Ascending aorta (tissue), 2 donors: ENCODE measurements at regions of chr9 and their contacts with region 1.

Region 1: DNA sequence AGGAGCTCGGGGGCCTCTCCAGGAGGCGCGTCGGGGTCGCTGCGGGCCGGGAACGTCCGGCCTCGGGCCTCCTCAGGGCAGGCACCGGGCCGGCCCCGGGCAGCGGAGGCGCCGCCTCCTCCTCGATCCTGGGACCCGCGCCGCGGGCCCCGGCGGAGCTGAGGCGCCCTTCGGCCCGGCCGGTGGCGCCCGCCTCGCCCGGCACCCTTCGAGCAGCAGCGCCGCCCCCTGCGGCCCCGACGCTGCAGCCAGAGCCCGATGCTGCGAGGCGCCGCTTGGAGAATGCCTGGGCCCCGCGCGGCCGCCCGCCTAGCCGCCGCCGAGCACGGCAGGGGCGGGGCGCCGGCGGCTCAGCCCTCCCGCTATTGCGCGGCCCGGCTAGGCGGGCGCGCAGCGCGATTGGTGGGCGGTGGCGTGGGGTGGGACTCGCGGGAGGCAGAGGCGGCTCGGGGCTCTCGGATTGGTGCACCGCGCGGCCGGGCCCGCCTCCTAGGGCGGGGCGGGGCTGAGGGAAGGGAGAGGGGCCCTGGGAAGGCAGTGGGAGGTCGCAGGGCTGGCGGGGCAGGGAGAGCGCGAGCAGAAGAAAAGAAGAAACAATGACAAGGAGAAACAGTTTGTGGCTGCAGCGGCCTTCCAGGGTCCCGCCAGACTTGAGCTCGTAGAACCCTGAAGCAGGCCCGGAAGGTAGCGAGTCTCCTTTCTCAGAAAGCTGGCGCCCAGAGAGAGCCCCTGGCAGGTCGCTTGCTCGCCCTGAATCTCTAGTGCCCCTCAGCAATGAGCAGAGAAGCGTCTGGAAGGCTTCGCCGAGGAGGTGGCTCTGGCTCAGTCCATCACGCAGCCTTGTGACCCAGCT is at the start of gene EEIG1:
- DNase-seq: peak; percentile 78 to 97
- H3K4me3 ChIP-seq: peak within 1 kb of the TSS; percentile 71 to 87
- H3K27ac ChIP-seq: peak within 1 kb of the TSS; percentile 89 to 90
- H3K4me1 ChIP-seq: peaks cover 20 to 37% of the 10 kb centered on the region in 2 donors
- H3K27me3 ChIP-seq: no peaks in the 10 kb centered on the region
- CTCF ChIP-seq: no peak
- total RNA-seq, gene EEIG1: 32.8 TPM

Region 2: DNA sequence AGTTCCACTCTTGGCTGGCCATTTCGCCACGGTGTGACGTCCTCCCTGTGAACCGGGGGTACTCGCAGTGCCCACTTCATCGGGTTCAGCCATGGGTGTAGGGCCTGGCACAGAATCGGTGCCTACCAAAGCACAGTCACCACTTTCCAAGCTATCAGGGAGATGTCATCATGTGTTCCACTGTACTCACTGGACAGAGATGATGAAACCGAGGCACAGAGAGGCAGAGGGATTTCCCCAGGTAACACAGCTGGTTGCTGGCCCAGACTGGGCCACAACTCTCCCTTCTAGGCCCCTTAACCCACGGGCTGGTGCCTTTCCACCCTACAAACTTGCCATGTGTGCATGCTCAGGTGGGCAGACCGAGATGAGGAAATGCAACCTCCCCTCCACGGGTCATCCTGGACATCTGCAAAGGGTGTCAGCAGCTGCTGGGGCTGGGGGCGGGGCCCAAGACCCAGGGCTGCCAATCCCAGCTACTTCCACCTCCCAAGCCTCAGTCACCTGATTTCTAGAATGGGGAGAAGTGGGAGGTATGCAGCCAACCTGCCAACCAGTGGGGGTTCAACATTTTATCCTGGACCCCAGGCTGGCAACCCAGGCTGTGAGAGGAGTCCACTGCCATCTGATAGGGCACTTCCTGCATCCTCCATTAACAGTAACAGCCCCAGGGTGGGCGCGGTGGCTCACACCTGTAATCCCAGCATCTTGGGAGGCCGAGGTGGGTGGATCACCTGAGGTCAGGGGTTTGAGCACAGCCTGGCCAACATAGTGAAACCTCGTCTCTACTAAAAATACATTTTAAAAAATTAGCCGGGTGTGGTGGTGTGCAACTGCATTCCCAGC is 201.6 kb before region 1 on chr9:
- intact Hi-C with region 1: no loop called
- DNase-seq: no peak
- H3K4me3 ChIP-seq: no peak overlapping the region
- H3K27ac ChIP-seq: no peak overlapping the region
- H3K4me1 ChIP-seq: no peaks in the 10 kb centered on the region
- H3K27me3 ChIP-seq: no peaks in the 10 kb centered on the region
- CTCF ChIP-seq: no peak

Region 3: DNA sequence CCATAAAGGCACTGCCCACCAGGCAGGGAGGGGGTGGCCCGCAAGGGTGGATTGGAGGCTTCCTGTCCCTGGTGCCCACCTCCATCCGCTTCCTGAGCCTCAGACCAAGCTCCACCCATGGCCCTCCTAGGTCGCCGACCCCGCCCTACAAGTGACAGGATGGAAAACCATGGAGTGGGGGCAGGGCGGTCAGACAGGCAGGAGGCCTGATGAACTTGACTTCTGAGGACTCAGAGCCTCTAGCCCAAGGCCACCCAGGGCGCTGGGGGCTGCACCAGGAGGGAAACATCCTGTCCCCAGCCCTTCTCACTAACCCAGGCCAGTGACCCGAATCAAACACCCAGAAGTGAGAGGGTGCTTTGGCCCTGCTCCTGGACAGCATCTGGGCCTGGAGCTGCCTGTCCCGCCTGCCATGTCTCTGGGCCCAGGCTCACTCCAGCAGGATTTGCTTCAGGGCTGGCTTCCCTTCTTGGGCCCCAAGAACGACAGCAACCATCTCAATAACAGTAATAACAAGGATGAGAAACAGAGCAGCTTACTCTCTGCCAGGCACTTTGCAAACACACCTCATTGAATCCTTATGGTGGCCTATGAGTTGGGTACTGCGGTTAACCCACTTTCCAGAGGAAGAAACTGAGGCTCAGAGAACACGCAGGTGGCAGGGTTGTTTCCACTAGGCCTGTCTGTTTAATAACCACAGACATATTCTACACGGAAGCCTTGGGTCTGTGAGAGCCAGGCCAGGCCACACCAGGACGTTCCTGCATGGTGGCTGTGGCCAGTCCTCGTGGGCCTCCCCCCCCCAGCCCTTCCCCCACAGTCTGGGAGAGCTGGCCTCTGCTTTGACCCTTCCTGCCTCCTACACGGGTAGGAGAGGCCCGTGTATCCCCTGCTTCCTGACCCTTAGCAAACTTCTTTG is 77.1 kb before region 1 on chr9:
- intact Hi-C with region 1: loop called (anchors 2 kb)
- DNase-seq: peak; percentile 55 to 89
- H3K4me3 ChIP-seq: peak overlapping the region in 1 of 2 donors; percentile 31
- H3K27ac ChIP-seq: peak overlapping the region; percentile 86 to 88
- H3K4me1 ChIP-seq: peaks cover 24 to 53% of the 10 kb centered on the region in 2 donors
- H3K27me3 ChIP-seq: no peaks in the 10 kb centered on the region
- CTCF ChIP-seq: no peak

Region 4: GRCh38 chr9:127943731-127944144 is 37.2 kb before region 1 on chr9:
- intact Hi-C with region 1: loop called (anchors 2 kb)
- DNase-seq: peak in 1 of 2 donors; percentile 90
- H3K4me3 ChIP-seq: no peak overlapping the region
- H3K27ac ChIP-seq: no peak overlapping the region
- H3K4me1 ChIP-seq: peaks cover 0 to 4% of the 10 kb centered on the region in 2 donors
- H3K27me3 ChIP-seq: no peaks in the 10 kb centered on the region
- CTCF ChIP-seq: peak; percentile 91 to 97 (median 96)

Region 5: GRCh38 chr9:127963359-127964064 is 17.4 kb before region 1 on chr9:
- intact Hi-C with region 1: loop called (anchors 1 kb)
- DNase-seq: no peak
- H3K4me3 ChIP-seq: no peak overlapping the region
- H3K27ac ChIP-seq: peak overlapping the region; percentile 97 to 98
- H3K4me1 ChIP-seq: peaks cover 21 to 63% of the 10 kb centered on the region in 2 donors
- H3K27me3 ChIP-seq: no peaks in the 10 kb centered on the region
- CTCF ChIP-seq: no peak

Region 6: GRCh38 chr9:128034821-128035764 is 54.2 kb after region 1 on chr9:
- intact Hi-C with region 1: loop called (anchors 2 kb)
- DNase-seq: peak in 1 of 2 donors; percentile 81
- H3K4me3 ChIP-seq: no peak overlapping the region
- H3K27ac ChIP-seq: no peak overlapping the region
- H3K4me1 ChIP-seq: no peaks in the 10 kb centered on the region
- H3K27me3 ChIP-seq: no peaks in the 10 kb centered on the region
- CTCF ChIP-seq: peak; percentile 86 to 92 (median 89)

Region 7: DNA sequence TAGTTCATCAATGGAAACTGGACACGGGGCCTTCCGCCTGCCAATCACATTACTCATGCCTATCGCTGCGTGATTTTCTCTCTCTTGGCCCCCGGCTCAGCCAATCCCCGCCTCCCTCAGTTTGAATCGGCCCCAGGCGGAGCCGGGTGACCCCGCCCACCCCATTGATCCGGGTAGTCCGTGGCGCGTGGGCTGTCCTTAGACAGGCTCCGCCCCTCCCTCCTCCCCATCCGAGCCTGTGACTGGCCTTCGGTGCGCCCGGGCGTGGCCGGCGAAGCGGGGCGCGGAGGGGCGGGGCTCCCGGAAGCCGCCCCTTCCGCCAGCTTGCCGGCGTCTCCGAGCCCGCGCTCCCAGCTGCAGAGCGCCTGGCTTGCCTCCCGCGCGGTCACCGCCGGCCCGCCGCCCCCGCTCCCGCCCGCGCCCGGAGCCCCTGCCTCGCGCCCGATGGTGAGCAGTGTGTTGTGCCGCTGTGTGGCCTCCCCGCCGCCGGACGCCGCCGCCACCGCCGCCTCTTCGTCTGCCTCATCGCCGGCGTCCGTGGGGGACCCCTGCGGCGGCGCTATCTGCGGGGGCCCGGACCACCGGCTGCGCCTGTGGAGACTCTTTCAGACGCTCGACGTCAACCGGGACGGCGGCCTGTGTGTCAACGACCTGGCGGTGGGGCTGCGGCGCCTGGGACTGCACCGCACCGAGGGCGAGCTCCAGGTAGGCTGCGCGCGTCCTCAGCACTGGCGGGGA is 87.1 kb after region 1 on chr9 and contains the start of gene SLC25A25:
- intact Hi-C with region 1: loop called (anchors 1 kb)
- DNase-seq: peak; percentile 100
- H3K4me3 ChIP-seq: peak within 1 kb of the TSS; percentile 91 to 98
- H3K27ac ChIP-seq: peak within 1 kb of the TSS; percentile 95 to 99
- H3K4me1 ChIP-seq: peaks cover 22 to 39% of the 10 kb centered on the region in 2 donors
- H3K27me3 ChIP-seq: no peaks in the 10 kb centered on the region
- CTCF ChIP-seq: no peak
- total RNA-seq, gene SLC25A25: 27.4 TPM

Region 8: DNA sequence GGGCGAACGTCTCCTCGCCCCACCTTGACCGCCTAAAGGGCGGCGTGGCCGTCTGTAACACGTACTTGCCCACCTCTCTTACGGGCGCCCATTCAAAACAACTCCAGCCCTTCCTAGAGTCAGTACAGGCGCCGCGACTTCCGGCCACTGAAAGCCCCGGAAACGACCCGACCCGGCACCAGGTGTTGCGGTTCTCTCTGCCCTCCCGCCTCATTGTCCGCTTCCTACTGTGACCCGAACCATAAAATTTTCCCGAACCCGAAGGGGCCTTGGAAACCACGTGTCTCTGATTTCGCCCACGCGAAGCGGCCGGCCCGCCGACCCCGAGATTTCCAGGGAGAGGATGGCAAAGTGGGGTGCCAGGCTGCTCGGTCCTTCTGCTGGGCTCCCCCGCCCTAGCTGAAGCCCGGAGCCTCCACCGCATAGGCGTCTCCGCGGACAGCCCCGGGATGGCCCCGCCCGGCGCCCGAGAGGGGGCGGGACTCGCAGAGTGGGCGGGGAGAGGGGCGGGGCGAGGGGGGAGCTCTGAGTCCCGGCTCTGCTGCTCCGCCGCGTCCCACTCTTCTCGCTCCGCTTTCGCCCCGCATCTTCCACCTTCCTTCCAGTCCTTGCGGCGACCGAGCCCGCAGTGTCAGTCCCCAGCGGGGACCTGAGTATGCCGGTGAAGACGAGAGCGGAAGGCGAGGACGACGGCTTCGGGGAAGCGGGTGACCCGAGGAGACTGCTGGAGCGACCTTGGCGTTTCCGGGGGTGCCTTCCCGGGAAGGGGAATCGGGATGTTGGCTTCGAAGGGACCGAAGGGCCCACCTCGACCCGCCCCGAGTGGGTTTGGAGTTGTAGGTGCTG is 147.3 kb after region 1 on chr9:
- intact Hi-C with region 1: loop called (anchors 5 kb)
- DNase-seq: peak; percentile 27 to 87
- H3K4me3 ChIP-seq: peak overlapping the region; percentile 95 to 100
- H3K27ac ChIP-seq: peak overlapping the region; percentile 95
- H3K4me1 ChIP-seq: peaks cover 4 to 19% of the 10 kb centered on the region in 2 donors
- H3K27me3 ChIP-seq: no peaks in the 10 kb centered on the region
- CTCF ChIP-seq: no peak